ENCODE measurements at regions of chr20 and their contacts with region 1.

Region 1: GRCh38 chr20:42906120-42906519 is 283.6 kb downstream of the PTPRT start:
- DNase-seq: no peak
- H3K4me3 ChIP-seq: no peak overlapping the region
- H3K27ac ChIP-seq: no peak overlapping the region
- H3K4me1 ChIP-seq: no peaks in the 10 kb centered on the region
- H3K27me3 ChIP-seq: no peaks in the 10 kb centered on the region
- CTCF ChIP-seq: no peak

Region 2: GRCh38 chr20:42857446-42857845 is 48.7 kb before region 1 on chr20:
- intact Hi-C with region 1: loop called (anchors 5 kb)
- DNase-seq: no peak
- H3K4me3 ChIP-seq: no peak overlapping the region
- H3K27ac ChIP-seq: no peak overlapping the region
- H3K4me1 ChIP-seq: no peaks in the 10 kb centered on the region
- H3K27me3 ChIP-seq: no peaks in the 10 kb centered on the region
- CTCF ChIP-seq: no peak

Measured in ascending aorta (tissue), 2 donors.